ENCODE measurements at regions of chr20 and their contacts with region 1.

Region 1: DNA sequence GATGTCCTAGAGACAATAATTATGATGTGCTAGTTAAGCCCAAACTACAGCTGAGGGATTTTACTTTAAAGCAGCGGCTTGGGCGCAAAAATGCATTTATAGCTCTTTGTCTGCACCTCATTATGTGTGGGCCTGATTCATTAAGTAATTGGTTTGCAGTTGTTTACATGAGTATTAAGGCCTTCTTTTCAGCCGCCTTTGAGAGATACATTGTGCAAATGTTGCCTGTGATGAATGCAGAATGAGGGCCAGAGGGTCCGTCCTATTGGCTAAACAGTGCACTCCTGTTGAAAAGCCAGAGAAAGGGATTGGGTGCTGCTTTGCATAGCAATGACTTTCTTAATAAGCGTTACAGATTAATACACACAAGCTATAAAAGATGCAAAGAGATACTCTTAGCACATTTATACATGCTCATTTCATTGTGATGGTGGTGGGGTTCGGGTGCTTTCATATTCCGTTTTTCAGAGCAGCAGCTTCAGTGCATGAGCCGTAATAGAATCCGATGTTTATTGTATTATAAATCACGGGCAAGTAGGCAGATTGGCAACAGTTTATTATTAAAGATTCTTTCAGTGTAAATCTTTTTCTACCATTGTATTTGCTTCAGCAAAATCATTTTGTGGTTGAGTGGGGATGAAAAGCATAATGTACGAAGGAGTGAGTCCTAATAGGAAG is 68.2 kb upstream of the XRN2 start:
- DNase-seq: no peak
- ATAC-seq: no peak
- H3K4me3 Mint-ChIP-seq: no peak overlapping the region
- H3K27ac Mint-ChIP-seq: no peak overlapping the region
- H3K4me1 Mint-ChIP-seq: peaks cover 2 to 6% (median 5%) of the 10 kb centered on the region in 4 donors
- H3K27me3 Mint-ChIP-seq: no peaks in the 10 kb centered on the region

Region 2: DNA sequence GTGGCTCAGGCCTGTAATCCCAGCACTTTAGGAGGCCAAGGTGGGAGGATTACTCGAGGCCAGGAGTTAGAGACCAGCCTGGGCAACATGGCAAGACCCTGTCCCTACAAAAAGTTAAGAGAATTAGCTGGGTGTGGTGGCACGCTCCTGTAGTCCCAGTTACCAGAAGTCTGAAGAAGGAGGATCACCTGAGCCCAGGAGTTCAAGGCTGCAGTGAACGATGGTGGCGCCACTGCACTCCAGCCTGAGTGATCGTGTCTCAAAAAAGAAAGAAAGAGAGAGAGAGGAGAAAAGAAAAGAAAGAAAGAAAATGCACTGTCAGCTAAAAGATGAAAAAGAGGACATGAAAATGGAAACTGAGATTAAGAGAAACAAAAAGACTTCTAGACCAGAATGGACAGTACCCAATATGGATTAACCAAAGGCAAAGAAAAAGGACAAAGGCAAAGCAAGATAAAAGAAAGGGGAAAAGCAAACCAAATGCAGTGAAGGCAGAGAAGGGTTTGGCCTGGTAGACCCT is 513.5 kb before region 1 on chr20:
- POLR2A ChIA-PET with region 1: interaction called, 11 read pairs
- DNase-seq: no peak
- ATAC-seq: no peak
- H3K4me3 Mint-ChIP-seq: no peak overlapping the region
- H3K27ac Mint-ChIP-seq: no peak overlapping the region
- H3K4me1 Mint-ChIP-seq: no peaks in the 10 kb centered on the region
- H3K27me3 Mint-ChIP-seq: no peaks in the 10 kb centered on the region